A549 (cell line): ENCODE measurements at regions of chr17 and their contacts with region 1.

Region 1: GRCh38 chr17:72592242-72592966 is 471.6 kb downstream of the SOX9 start:
- DNase-seq: peak; percentile 90 to 97
- ATAC-seq: peak; percentile 72 to 86
- H3K4me3 ChIP-seq: peak overlapping the region; percentile 78
- H3K27ac ChIP-seq: peak overlapping the region; percentile 80 to 91
- H3K4me1 ChIP-seq: peaks cover 28% of the 10 kb centered on the region
- CTCF ChIP-seq: no peak
- EP300 ChIP-seq: no peak
- POLR2A ChIP-seq: peak; percentile 100
- RAD21 ChIP-seq: peak; percentile 28 to 67; a peak in 4 of 5 replicates

Region 2: GRCh38 chr17:72602517-72603419 is 10.4 kb after region 1 on chr17:
- CTCF ChIA-PET with region 1: interaction called, 14 read pairs
- POLR2A ChIA-PET with region 1: interaction called, 177 read pairs
- DNase-seq: peak; percentile 97
- ATAC-seq: peak; percentile 92 to 93
- H3K4me3 ChIP-seq: 0 out of 3 replicates have a peak overlapping the region, but pooled peaks have one; percentile 10
- H3K27ac ChIP-seq: peak overlapping the region; percentile 90 to 95
- H3K4me1 ChIP-seq: peaks cover 65% of the 10 kb centered on the region
- CTCF ChIP-seq: no peak
- EP300 ChIP-seq: peak; percentile 72 to 79; a peak in 2 of 5 replicates
- POLR2A ChIP-seq: no peak
- RAD21 ChIP-seq: peak; percentile 32 to 33; a peak in 2 of 5 replicates

Region 3: GRCh38 chr17:72618001-72618509 is 25.7 kb after region 1 on chr17:
- CTCF ChIA-PET with region 1: interaction called, 8 read pairs
- POLR2A ChIA-PET with region 1: interaction called, 93 read pairs
- DNase-seq: peak in 1 of 2 experiments; percentile 43
- ATAC-seq: no peak
- H3K4me3 ChIP-seq: no peak overlapping the region
- H3K27ac ChIP-seq: peak overlapping the region; percentile 89 to 99; a peak in 5 of 6 replicates
- H3K4me1 ChIP-seq: peaks cover 48% of the 10 kb centered on the region
- CTCF ChIP-seq: no peak
- EP300 ChIP-seq: no peak
- POLR2A ChIP-seq: no peak
- RAD21 ChIP-seq: no peak

Region 4: GRCh38 chr17:72661093-72661944 is 68.9 kb after region 1 on chr17:
- CTCF ChIA-PET with region 1: no interaction called
- POLR2A ChIA-PET with region 1: interaction called, 13 read pairs
- DNase-seq: no peak
- ATAC-seq: no peak
- H3K4me3 ChIP-seq: no peak overlapping the region
- H3K27ac ChIP-seq: peak overlapping the region in 1 of 2 experiments; percentile 32; a peak in 3 of 6 replicates
- H3K4me1 ChIP-seq: peaks cover 17% of the 10 kb centered on the region
- CTCF ChIP-seq: 0 out of 3 replicates have a peak, but pooled peaks have one; percentile 23
- EP300 ChIP-seq: no peak
- POLR2A ChIP-seq: no peak
- RAD21 ChIP-seq: no peak

Region 5: GRCh38 chr17:72705905-72706395 is 113.5 kb after region 1 on chr17:
- CTCF ChIA-PET with region 1: interaction called, 3 read pairs
- POLR2A ChIA-PET with region 1: interaction called, 11 read pairs
- DNase-seq: no peak
- ATAC-seq: 0 out of 6 replicates have a peak, but pooled peaks of 1 of the 2 experiments have one; percentile 3
- H3K4me3 ChIP-seq: no peak overlapping the region
- H3K27ac ChIP-seq: peak overlapping the region; percentile 83 to 85
- H3K4me1 ChIP-seq: peaks cover 45% of the 10 kb centered on the region
- CTCF ChIP-seq: no peak
- EP300 ChIP-seq: no peak
- POLR2A ChIP-seq: no peak
- RAD21 ChIP-seq: no peak